Caco-2 (cell line): ENCODE measurements at regions of chr19 and their contacts with region 1.

Region 1: DNA sequence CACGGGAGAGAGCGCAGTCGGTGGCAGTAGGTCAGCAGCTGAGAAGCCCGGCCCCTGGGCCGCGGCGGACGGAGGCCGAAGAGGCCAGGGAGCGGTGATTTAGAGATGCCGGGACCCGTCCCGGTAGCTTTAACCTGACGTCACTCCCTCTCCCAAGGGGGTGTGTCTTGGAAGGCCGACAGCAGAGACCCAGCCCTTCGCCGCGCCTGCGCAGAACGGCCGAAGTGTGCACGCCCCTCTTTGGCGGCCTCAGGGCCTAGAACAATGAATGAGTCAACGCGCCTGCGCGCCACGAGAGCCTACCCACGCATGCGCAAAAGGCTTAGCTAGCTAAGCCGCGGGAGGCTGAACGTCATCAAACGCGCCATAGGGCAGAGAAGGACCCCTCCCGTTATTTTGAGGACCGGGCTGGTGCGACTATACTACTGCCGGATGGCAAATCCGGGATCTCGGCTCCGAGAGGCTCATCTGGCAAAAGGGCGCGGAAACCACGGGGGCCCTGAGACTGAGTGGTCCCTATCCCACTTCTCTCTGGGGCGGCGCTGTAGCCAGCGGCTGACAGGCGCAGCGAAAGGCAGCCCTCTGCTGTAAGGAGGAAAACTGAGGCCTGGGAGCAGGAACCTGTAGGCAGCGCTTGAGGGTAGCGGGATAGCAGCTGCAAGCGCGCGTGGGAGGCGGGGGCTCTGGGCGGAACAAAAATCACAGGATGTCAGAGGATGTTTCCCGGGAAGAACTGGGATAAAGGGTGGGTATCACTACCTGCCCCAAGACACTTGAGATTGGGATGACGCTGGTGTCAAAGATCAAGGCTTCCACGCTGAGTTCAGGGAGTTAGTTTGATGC is at the starts of genes IRGQ and ZNF576:
- DNase-seq: peak; percentile 100
- H3K4me3 ChIP-seq: peak within 1 kb of the TSS; percentile 73
- H3K4me3 Mint-ChIP-seq: peak within 1 kb of the TSS; percentile 97
- H3K27ac Mint-ChIP-seq: peak within 1 kb of the TSS; percentile 95
- H3K4me1 ChIP-seq: peaks cover 6% of the 10 kb centered on the region; the same call in 1 of the 2 replicates
- H3K4me1 Mint-ChIP-seq: peaks cover 7% of the 10 kb centered on the region
- H3K27me3 ChIP-seq: no peaks in the 10 kb centered on the region
- H3K27me3 Mint-ChIP-seq: no peaks in the 10 kb centered on the region
- CTCF ChIP-seq: peak in 1 of 2 experiments; percentile 9
- total RNA-seq, gene IRGQ: 27.7 and 30.1 TPM in 2 replicates
- total RNA-seq, gene ZNF576: 13.2 and 16.9 TPM in 2 replicates

Region 2: GRCh38 chr19:43463381-43464136 is 132.7 kb before region 1 on chr19:
- CTCF ChIA-PET with region 1: interaction called, 4 read pairs
- POLR2A ChIA-PET with region 1: interaction called, 4 read pairs
- intact Hi-C with region 1: loop called (anchors 10 kb)
- DNase-seq: peak; percentile 99
- H3K4me3 ChIP-seq: peak overlapping the region; percentile 64
- H3K4me3 Mint-ChIP-seq: peak overlapping the region; percentile 100
- H3K27ac Mint-ChIP-seq: peak overlapping the region; percentile 95
- H3K4me1 ChIP-seq: 0 out of 2 replicates have a peak, but pooled peaks cover 4% of the 10 kb centered on the region
- H3K4me1 Mint-ChIP-seq: peaks cover 7% of the 10 kb centered on the region
- H3K27me3 ChIP-seq: no peaks in the 10 kb centered on the region
- H3K27me3 Mint-ChIP-seq: no peaks in the 10 kb centered on the region
- CTCF ChIP-seq: no peak

Region 3: GRCh38 chr19:43555185-43555770 is 40.9 kb before region 1 on chr19:
- CTCF ChIA-PET with region 1: interaction called, 27 read pairs
- POLR2A ChIA-PET with region 1: no interaction called
- intact Hi-C with region 1: loop called (anchors 2 kb)
- DNase-seq: peak; percentile 72 to 84
- H3K4me3 ChIP-seq: no peak overlapping the region
- H3K4me3 Mint-ChIP-seq: no peak overlapping the region
- H3K27ac Mint-ChIP-seq: no peak overlapping the region
- H3K4me1 ChIP-seq: no peaks in the 10 kb centered on the region
- H3K4me1 Mint-ChIP-seq: no peaks in the 10 kb centered on the region
- H3K27me3 ChIP-seq: no peaks in the 10 kb centered on the region
- H3K27me3 Mint-ChIP-seq: no peaks in the 10 kb centered on the region
- CTCF ChIP-seq: peak; percentile 79 to 90

Region 4: DNA sequence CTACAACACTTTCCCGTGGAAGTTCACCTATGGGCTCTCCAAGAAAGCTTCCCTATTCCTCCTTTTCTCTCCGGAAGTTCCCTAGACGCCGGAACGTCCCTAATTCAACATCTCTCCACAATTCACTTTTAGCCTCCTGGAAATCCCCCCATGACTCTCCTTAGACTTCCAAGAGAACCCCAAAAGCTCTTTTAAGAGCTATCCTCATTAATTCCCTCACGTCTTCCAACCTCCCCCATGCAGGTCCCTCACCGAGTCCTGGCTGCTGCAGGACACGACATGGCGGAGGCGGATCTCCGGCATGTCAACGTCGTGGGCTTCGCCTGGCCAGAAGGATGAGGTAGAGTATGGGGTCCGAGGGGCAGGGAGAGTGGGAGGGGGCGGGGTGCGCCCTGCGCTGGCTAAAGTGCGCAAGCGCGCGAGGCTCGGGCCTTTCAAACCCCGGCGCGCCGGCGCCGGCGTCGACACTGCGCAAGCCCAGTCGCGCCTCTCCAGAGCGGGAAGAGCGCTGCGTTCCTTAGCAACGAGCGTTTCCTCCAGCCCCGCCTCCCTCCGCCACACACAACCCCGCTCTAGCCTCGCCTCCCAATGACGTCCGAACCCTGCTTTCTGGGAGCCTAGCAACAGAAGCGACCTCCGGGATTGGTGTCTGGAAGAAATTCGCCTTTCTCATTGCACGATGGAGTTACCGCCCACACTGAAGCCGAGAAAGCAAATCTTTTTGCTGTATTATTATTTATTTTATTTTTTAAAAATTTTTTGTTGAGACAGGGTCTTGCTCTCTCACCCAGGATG is 20.9 kb before region 1 on chr19 and contains the starts of genes PINLYP and XRCC1:
- CTCF ChIA-PET with region 1: interaction called, 6 read pairs
- POLR2A ChIA-PET with region 1: interaction called, 4 read pairs
- intact Hi-C with region 1: loop called (anchors 1 kb)
- DNase-seq: peak; percentile 96 to 97
- H3K4me3 ChIP-seq: peak within 1 kb of the TSS; percentile 92
- H3K4me3 Mint-ChIP-seq: peak within 1 kb of the TSS; percentile 95
- H3K27ac Mint-ChIP-seq: peak within 1 kb of the TSS; percentile 96
- H3K4me1 ChIP-seq: no peaks in the 10 kb centered on the region
- H3K4me1 Mint-ChIP-seq: no peaks in the 10 kb centered on the region
- H3K27me3 ChIP-seq: no peaks in the 10 kb centered on the region
- H3K27me3 Mint-ChIP-seq: peaks cover 10% of the 10 kb centered on the region
- CTCF ChIP-seq: no peak
- total RNA-seq, gene PINLYP: 0.30 TPM in 1 of 2 replicates, not detected in the other
- total RNA-seq, gene XRCC1: 40.7 and 44.5 TPM in 2 replicates

Region 5: DNA sequence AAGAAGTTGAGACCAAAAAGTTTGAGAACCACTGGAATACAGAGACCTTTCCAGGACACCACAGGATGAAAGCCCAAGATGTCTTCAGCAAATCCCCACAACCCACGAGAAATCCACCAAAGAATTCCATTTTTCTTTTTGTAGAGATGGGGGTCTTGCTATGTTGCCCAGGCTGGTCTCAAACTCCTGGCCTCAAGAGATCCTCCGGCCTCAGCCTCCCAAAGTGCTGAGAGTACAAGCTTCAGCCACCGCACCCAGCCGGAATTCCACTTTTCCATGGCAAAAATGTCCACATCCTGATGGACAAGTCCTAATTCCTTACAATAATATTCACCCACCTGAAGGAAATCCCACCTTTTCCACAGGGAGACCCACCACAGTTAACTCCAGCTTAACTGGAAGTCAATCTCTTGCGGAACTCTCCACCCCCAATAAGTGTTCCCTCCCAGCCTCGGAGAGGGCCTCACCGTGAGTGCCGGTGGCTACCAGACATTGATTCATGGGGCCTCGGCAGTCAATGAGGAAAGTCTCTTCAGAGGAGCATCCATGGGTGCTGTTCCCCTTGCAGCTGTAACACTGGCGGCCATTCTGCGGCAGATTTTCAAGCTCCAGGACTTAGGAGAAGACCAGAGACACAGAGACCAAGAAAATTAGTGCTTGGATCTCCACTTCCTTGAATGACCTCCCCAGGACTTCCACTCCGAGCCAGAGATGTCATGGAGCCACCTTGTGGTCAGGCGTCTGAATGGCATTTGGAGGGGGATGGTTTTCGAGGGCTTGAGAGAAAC is 55.7 kb after region 1 on chr19:
- CTCF ChIA-PET with region 1: no interaction called
- POLR2A ChIA-PET with region 1: no interaction called
- intact Hi-C with region 1: loop called (anchors 1 kb)
- DNase-seq: peak; percentile 76 to 79
- H3K4me3 ChIP-seq: no peak overlapping the region
- H3K4me3 Mint-ChIP-seq: peak overlapping the region; percentile 37
- H3K27ac Mint-ChIP-seq: peak overlapping the region; percentile 36
- H3K4me1 ChIP-seq: no peaks in the 10 kb centered on the region
- H3K4me1 Mint-ChIP-seq: no peaks in the 10 kb centered on the region
- H3K27me3 ChIP-seq: no peaks in the 10 kb centered on the region
- H3K27me3 Mint-ChIP-seq: no peaks in the 10 kb centered on the region
- CTCF ChIP-seq: peak; percentile 79 to 94

Region 6: GRCh38 chr19:43726736-43727592 is 130.7 kb after region 1 on chr19:
- CTCF ChIA-PET with region 1: no interaction called
- POLR2A ChIA-PET with region 1: no interaction called
- intact Hi-C with region 1: no loop called
- DNase-seq: no peak
- H3K4me3 ChIP-seq: no peak overlapping the region
- H3K4me3 Mint-ChIP-seq: no peak overlapping the region
- H3K27ac Mint-ChIP-seq: no peak overlapping the region
- H3K4me1 ChIP-seq: no peaks in the 10 kb centered on the region
- H3K4me1 Mint-ChIP-seq: no peaks in the 10 kb centered on the region
- H3K27me3 ChIP-seq: no peaks in the 10 kb centered on the region
- H3K27me3 Mint-ChIP-seq: no peaks in the 10 kb centered on the region
- CTCF ChIP-seq: no peak

Region 7: DNA sequence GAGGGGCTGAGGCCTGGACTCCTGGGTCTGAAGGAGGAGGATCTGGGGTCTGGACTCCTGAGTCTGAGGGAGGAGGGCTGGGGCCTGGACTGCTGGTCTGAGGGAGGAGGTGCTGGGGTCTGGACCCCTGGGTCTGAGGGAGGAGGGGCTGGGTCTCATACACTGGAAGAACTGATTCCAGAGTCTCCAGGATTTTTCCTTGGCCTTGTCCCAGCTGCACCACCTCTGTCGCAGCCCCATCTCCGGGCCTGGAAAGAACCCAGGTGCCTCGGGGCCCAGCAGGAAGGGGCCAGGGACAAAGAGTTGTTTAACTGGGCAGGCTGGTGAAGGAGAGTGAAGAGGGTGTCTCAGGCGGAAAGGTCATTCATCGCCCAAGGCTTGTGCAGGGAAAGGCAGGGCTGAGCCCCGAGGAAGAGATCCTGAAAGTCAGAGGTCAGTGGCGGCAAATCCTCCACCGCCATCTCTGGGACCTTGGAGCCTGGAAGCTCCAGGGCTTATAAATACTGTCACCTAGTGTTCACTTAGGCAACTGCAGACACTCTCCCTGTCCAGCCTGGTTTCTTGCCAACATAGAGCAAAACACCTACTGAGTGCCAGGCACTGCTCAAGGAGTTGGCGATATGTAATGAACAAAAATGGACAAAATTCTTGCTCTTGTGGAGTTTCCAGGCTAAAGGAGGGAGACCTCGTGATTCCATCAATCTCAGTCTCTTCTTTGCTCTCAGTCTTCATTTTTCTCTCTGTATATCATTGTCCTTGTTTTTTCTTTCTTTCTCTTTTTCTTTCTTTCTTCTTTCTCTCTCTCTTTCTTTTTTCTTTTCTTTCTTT is 189.0 kb after region 1 on chr19:
- CTCF ChIA-PET with region 1: no interaction called
- POLR2A ChIA-PET with region 1: no interaction called
- intact Hi-C with region 1: loop called (anchors 10 kb)
- DNase-seq: peak; percentile 78 to 84
- H3K4me3 ChIP-seq: no peak overlapping the region
- H3K4me3 Mint-ChIP-seq: no peak overlapping the region
- H3K27ac Mint-ChIP-seq: peak overlapping the region; percentile 1
- H3K4me1 ChIP-seq: peaks cover 4% of the 10 kb centered on the region
- H3K4me1 Mint-ChIP-seq: peaks cover 21% of the 10 kb centered on the region
- H3K27me3 ChIP-seq: no peaks in the 10 kb centered on the region
- H3K27me3 Mint-ChIP-seq: no peaks in the 10 kb centered on the region
- CTCF ChIP-seq: peak; percentile 96 to 99